ENCODE measurements at regions of chr3 and their contacts with region 1.

Region 1: GRCh38 chr3:149203758-149204157 is 17.9 kb downstream of the CP start:
- DNase-seq: no peak
- ATAC-seq: peak; percentile 97
- H3K4me3 Mint-ChIP-seq: peak overlapping the region; percentile 17
- H3K27ac Mint-ChIP-seq: peak overlapping the region; percentile 54
- H3K4me1 Mint-ChIP-seq: peaks cover 18% of the 10 kb centered on the region
- H3K27me3 Mint-ChIP-seq: no peaks in the 10 kb centered on the region
- CTCF ChIP-seq: no peak

Region 2: DNA sequence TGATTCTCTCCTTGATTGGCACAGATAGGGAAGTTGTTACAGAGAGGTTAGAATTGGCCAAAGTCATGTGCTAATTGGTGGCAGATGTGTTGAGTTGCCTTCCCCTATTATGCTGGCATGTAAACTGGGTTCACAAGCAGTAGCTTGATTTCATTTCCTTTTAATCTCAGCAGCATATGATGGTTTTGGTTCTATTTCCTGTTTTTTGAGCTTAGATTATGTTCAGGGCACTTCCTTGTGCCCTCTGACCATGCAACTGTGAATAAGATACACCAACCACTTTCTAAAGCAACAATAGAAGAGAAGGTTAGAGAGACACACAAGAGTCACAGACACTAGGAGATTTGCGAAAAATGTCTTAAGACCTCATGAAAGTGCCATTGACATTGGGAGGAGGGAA is 57.8 kb before region 1 on chr3:
- CTCF ChIA-PET with region 1: interaction called, 3 read pairs
- POLR2A ChIA-PET with region 1: no interaction called
- intact Hi-C with region 1: loop called (anchors 5 kb)
- DNase-seq: no peak
- ATAC-seq: peak; percentile 87
- H3K4me3 Mint-ChIP-seq: no peak overlapping the region
- H3K27ac Mint-ChIP-seq: no peak overlapping the region
- H3K4me1 Mint-ChIP-seq: peaks cover 32% of the 10 kb centered on the region
- H3K27me3 Mint-ChIP-seq: no peaks in the 10 kb centered on the region
- CTCF ChIP-seq: no peak

Region 3: GRCh38 chr3:149214702-149215101 is 10.9 kb after region 1 on chr3:
- CTCF ChIA-PET with region 1: no interaction called
- POLR2A ChIA-PET with region 1: no interaction called
- intact Hi-C with region 1: no loop called
- DNase-seq: no peak
- ATAC-seq: no peak
- H3K4me3 Mint-ChIP-seq: no peak overlapping the region
- H3K27ac Mint-ChIP-seq: no peak overlapping the region
- H3K4me1 Mint-ChIP-seq: no peaks in the 10 kb centered on the region
- H3K27me3 Mint-ChIP-seq: no peaks in the 10 kb centered on the region
- CTCF ChIP-seq: no peak

Region 4: GRCh38 chr3:149224736-149225594 is 21.2 kb after region 1 on chr3:
- CTCF ChIA-PET with region 1: no interaction called
- POLR2A ChIA-PET with region 1: interaction called, 3 read pairs
- intact Hi-C with region 1: loop called (anchors 2 kb)
- DNase-seq: no peak
- ATAC-seq: peak; percentile 69
- H3K4me3 Mint-ChIP-seq: peak overlapping the region; percentile 76
- H3K27ac Mint-ChIP-seq: peak overlapping the region; percentile 35
- H3K4me1 Mint-ChIP-seq: peaks cover 20% of the 10 kb centered on the region
- H3K27me3 Mint-ChIP-seq: no peaks in the 10 kb centered on the region
- CTCF ChIP-seq: no peak

Region 5: DNA sequence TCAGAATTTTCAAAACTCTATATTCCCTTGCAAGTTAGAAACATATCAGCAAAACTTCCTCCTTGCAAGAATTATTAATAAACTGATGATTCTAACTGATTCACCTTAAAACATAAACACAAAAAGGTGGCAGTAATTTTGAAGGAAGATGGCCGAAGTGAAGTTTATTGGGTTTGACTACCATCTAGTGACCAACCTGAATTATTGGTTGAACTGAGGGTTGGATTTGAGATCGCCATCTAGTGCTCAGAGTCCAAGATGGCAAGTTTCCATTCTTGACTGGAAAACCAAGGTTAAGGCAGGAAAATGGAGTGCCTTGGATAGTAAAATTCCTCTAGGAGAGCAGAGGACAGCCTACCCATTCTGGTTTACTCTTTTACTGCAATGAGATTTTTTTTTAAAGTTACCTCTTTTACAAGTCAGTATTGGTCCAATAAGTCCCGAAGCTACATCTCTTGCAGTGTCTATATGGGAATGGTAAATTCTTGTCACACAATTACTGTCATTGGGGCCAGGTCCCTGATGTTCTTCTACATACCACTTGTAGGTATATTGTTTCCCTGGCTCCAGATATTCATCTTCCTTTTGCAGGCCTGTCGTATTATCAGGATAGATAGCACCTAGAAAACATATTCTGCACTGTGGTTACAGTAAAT is 69.5 kb after region 1 on chr3:
- CTCF ChIA-PET with region 1: no interaction called
- POLR2A ChIA-PET with region 1: no interaction called
- intact Hi-C with region 1: loop called (anchors 2 kb)
- DNase-seq: no peak
- ATAC-seq: peak; percentile 88
- H3K4me3 Mint-ChIP-seq: no peak overlapping the region
- H3K27ac Mint-ChIP-seq: no peak overlapping the region
- H3K4me1 Mint-ChIP-seq: peaks cover 19% of the 10 kb centered on the region
- H3K27me3 Mint-ChIP-seq: no peaks in the 10 kb centered on the region
- CTCF ChIP-seq: peak; percentile 92

Region 6: DNA sequence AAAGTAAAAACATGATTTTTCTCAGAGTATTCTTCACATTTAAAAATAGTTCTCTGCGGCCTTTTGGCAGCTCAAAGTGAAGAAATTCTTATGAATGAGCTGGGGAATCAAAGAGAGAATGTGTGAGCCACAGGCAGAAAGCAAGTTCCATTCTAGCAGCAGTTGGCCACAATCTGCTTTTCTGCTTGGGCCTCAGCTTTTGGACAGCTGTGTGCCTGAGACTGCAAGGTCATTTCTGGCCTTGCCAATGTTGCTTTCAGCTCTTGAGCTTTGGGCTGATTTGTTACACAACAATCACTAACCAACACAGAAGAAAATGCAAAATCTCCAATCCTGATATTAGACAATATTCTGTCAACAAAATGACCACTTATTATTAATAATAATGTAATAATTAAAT is 256.4 kb after region 1 on chr3:
- CTCF ChIA-PET with region 1: no interaction called
- POLR2A ChIA-PET with region 1: no interaction called
- intact Hi-C with region 1: no loop called
- DNase-seq: no peak
- ATAC-seq: no peak
- H3K4me3 Mint-ChIP-seq: no peak overlapping the region
- H3K27ac Mint-ChIP-seq: no peak overlapping the region
- H3K4me1 Mint-ChIP-seq: no peaks in the 10 kb centered on the region
- H3K27me3 Mint-ChIP-seq: peaks cover 24% of the 10 kb centered on the region
- CTCF ChIP-seq: no peak

Measured in activated B cell treated with CpG ODN at 0.5 μM for 24 hours (primary cell).